ENCODE measurements at regions of chr1 and their contacts with region 1.

Region 1: DNA sequence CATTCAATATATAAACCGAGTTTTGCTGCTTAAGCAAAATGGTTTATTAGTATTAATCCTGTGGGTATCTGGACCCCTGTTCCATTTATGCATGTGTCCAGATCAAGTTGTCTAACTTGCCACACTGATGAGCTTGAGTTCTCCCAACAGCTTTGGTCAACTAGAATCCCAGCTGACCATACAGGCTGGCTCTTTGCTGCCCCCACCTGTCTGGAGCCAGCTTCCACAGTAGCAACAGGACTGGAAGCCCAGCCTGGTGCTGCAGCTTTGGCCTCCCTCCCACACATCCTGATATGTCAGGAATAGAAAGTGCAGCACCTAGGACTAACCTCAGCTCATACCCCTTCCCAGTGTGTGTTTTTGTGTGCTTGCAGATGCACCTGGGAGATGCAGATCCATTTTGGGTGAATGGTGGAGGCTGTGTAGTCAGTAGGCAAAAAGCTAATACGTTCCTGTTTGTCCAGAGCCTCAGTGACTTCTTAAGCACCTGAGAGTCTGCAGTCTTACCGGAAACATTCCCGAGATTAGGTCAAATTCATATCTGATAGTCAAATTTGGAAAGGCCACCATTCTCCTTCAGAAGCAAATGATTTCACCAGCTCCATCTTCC is 40.9 kb upstream of the BEND5 start:
- DNase-seq: peak in 3 of 4 donors; percentile 61 to 72 (median 65)
- ATAC-seq: peak; percentile 97
- H3K4me3 ChIP-seq: no peak overlapping the region
- H3K27ac ChIP-seq: no peak overlapping the region
- H3K4me1 ChIP-seq: no peaks in the 10 kb centered on the region
- H3K27me3 ChIP-seq: no peaks in the 10 kb centered on the region
- CTCF ChIP-seq: peak; percentile 56 to 67

Region 2: DNA sequence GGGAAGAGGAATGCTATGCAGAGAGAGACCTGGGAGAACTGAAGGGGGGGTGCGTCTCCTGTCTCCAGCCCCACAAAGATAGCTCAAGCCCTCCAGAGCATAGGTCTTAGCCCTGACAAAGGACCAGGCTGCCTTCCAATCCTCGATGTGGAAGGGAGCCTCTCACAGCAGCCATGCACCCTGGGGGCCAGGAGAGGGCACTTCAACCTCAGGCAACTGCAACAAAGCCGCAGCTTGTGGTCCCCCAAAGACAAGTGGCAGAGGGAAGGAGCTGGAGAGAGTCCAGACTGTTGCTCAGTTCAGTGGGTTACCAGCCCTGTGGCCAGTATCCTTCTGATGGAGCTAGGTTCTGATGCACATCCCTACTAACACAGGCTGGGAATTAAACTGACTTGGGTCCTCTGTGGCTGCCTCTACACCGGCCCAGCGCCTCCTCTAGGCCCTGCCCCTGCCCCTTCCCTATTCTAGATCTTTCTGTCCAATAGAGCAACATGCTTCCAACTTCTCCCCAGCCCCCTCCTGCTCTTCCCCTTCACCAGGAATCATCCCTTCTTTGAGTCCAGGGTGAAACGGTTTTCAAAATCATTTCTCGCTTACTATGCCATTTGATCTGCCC is 244.9 kb before region 1 on chr1:
- intact Hi-C with region 1: loop called in 1 of 2 experiments (anchors 10 kb)
- DNase-seq: peak; percentile 56 to 81 (median 67)
- ATAC-seq: peak; percentile 94
- H3K4me3 ChIP-seq: no peak overlapping the region
- H3K27ac ChIP-seq: peak overlapping the region in 1 of 2 donors; percentile 26
- H3K4me1 ChIP-seq: peaks cover 0 to 11% of the 10 kb centered on the region in 2 donors
- H3K27me3 ChIP-seq: no peaks in the 10 kb centered on the region
- CTCF ChIP-seq: peak; percentile 33 to 47

Region 3: DNA sequence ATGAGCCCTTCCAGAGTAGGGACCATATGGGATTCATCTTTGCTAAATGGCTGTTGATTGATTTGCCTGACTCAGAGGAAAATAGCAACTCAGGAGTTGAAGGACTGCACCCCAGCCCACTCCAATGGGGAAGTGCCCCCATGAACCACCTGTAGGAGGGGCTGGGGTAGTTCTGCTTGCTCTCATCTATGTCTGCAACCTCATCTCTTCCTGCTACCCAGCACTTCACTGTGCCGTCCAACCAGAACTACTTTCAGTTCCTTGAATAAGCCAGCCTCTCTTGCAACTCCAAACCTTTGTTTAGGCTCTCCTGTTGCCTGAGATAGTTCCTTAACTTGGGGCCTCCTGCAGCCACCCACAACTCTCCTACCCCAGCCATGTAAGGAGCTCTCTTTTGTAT is 67.5 kb before region 1 on chr1:
- intact Hi-C with region 1: no loop called
- DNase-seq: no peak
- ATAC-seq: no peak
- H3K4me3 ChIP-seq: no peak overlapping the region
- H3K27ac ChIP-seq: no peak overlapping the region
- H3K4me1 ChIP-seq: no peaks in the 10 kb centered on the region
- H3K27me3 ChIP-seq: no peaks in the 10 kb centered on the region
- CTCF ChIP-seq: no peak

Region 4: GRCh38 chr1:48947761-48948537 is 130.3 kb after region 1 on chr1:
- intact Hi-C with region 1: no loop called
- DNase-seq: no peak
- ATAC-seq: no peak
- H3K4me3 ChIP-seq: no peak overlapping the region
- H3K27ac ChIP-seq: no peak overlapping the region
- H3K4me1 ChIP-seq: no peaks in the 10 kb centered on the region
- H3K27me3 ChIP-seq: no peaks in the 10 kb centered on the region
- CTCF ChIP-seq: no peak

Measured in left lung (tissue), 14 donors.